IMR-90 (cell line): ENCODE measurements at regions of chr2 and their contacts with region 1.

Region 1: GRCh38 chr2:30577151-30577550 is 130.1 kb downstream of the LCLAT1 start:
- DNase-seq: no peak
- ATAC-seq: no peak
- H3K4me3 ChIP-seq: no peak overlapping the region
- H3K27ac ChIP-seq: no peak overlapping the region
- H3K4me1 ChIP-seq: no peaks in the 10 kb centered on the region
- H3K27me3 ChIP-seq: no peaks in the 10 kb centered on the region
- CTCF ChIP-seq: no peak
- POLR2A ChIP-seq: no peak
- RAD21 ChIP-seq: no peak

Region 2: GRCh38 chr2:30185186-30185585 is 392.0 kb before region 1 on chr2:
- CTCF ChIA-PET with region 1: no interaction called
- POLR2A ChIA-PET with region 1: no interaction called
- dilution Hi-C with region 1: no loop called
- in situ Hi-C with region 1: no loop called
- intact Hi-C with region 1: no loop called
- DNase-seq: peak; percentile 45
- ATAC-seq: no peak
- H3K4me3 ChIP-seq: no peak overlapping the region
- H3K27ac ChIP-seq: no peak overlapping the region
- H3K4me1 ChIP-seq: peaks cover 2% of the 10 kb centered on the region; the same call in 1 of the 2 replicates
- H3K27me3 ChIP-seq: peaks cover 8% of the 10 kb centered on the region
- CTCF ChIP-seq: no peak
- POLR2A ChIP-seq: no peak
- RAD21 ChIP-seq: no peak

Region 3: GRCh38 chr2:30611583-30611982 is 34.4 kb after region 1 on chr2:
- CTCF ChIA-PET with region 1: no interaction called
- POLR2A ChIA-PET with region 1: no interaction called
- dilution Hi-C with region 1: no loop called
- in situ Hi-C with region 1: no loop called
- intact Hi-C with region 1: loop called (anchors 5 kb)
- DNase-seq: no peak
- ATAC-seq: no peak; the same call in 1 of the 2 replicates
- H3K4me3 ChIP-seq: no peak overlapping the region
- H3K27ac ChIP-seq: peak overlapping the region; percentile 43; the same call in 1 of the 2 replicates
- H3K4me1 ChIP-seq: peaks cover 7% of the 10 kb centered on the region
- H3K27me3 ChIP-seq: no peaks in the 10 kb centered on the region
- CTCF ChIP-seq: no peak
- POLR2A ChIP-seq: no peak
- RAD21 ChIP-seq: no peak